CD8-positive, alpha-beta memory T cell (primary cell): ENCODE measurements at regions of chr17 and their contacts with region 1.

Region 1: GRCh38 chr17:1716076-1716995 is 6.2 kb upstream of the TLCD2 start:
- DNase-seq: peak; percentile 100
- H3K4me3 ChIP-seq: peak overlapping the region; percentile 85
- H3K4me3 Mint-ChIP-seq: peak overlapping the region; percentile 88 to 97 (median 93)
- H3K27ac ChIP-seq: peak overlapping the region; percentile 89
- H3K27ac Mint-ChIP-seq: peak overlapping the region; percentile 89 to 100 (median 96)
- H3K4me1 ChIP-seq: peaks cover 31% of the 10 kb centered on the region
- H3K4me1 Mint-ChIP-seq: peaks cover 26 to 39% (median 37%) of the 10 kb centered on the region in 3 donors
- H3K27me3 ChIP-seq: no peaks in the 10 kb centered on the region
- H3K27me3 Mint-ChIP-seq: no peaks in the 10 kb centered on the region

Region 2: DNA sequence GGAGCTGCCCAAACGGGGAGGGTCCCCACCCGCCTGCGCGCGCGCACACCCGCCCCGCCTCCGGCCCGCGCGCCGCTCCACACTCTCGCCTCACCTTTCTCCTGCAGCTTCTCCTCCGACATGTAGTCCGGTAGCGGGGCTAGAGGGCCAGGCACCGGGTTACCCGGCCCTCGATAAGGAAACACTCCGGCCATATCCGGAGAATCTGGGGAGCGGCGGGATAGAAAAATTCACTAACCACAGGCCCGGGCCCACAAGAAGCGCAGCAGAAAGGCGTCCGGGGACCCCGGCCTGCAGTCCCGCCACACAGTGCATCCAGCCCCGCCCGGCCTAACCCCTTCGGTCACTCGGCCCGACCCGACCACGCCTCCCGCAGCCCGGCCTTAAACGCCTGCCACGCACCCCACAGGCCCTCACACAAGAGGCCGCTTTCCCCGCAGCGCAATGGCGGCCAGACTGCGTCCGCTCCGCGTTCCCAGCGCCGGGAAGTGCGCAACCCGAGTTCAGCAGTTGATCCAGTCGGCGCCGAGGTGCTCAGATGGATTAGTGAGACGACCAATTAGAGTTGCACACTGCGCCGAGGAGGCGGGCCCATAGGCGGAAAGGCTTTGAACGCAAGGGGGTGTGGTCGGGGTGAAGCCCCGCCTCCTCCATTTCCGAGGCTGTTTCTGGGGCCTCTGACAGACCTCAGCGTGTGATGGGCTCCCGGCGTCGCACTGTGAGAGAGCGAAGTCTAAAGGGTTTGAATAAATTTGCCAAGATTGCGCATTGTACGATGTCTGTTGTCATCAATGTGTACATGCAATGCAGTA is 31.8 kb before region 1 on chr17 and contains the start of gene PRPF8:
- CTCF ChIA-PET with region 1: no interaction called
- POLR2A ChIA-PET with region 1: interaction called, 26 read pairs
- DNase-seq: peak; percentile 97 to 99 (median 97)
- H3K4me3 ChIP-seq: peak within 1 kb of the TSS; percentile 80
- H3K4me3 Mint-ChIP-seq: peak within 1 kb of the TSS; percentile 91 to 100 (median 99)
- H3K27ac ChIP-seq: peak within 1 kb of the TSS; percentile 94
- H3K27ac Mint-ChIP-seq: peak within 1 kb of the TSS; percentile 85 to 100 (median 99)
- H3K4me1 ChIP-seq: peaks cover 24% of the 10 kb centered on the region
- H3K4me1 Mint-ChIP-seq: peaks cover 38 to 53% (median 47%) of the 10 kb centered on the region in 3 donors
- H3K27me3 ChIP-seq: no peaks in the 10 kb centered on the region
- H3K27me3 Mint-ChIP-seq: no peaks in the 10 kb centered on the region
- total RNA-seq, gene PRPF8: 430 to 447 TPM

Region 3: DNA sequence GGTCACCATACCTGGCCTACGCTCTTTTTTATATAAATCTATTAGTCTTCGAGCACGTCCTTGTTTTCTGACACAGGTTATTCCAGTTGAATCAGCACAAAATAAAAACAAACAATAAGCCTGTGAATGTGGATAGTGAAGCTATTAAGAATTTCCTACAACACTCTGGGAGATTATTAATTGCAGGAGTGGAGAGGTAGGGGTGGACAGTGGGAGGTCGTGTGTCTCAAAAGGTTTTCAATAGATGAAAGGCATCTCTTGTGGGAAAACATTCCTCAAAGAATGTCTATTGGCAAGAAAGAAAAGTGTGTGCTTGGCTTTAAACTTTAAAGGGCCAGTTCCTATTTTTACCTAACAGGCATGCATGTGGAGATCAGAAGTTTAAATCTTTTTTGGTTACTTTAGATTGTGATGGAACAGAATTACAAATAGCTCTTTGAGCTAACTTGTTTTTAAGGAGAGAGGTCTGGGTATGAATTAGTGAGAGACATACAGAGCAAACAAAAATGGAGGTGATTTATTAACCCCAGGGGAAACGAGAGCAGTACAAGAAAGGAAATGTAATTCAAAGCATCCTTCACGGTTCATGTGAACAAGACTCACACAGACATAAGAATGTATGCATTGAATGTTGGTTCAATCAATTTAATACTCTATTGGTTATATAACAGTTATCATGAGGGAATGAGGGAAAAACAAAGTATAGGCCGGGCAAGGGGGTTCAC is 104.4 kb after region 1 on chr17:
- CTCF ChIA-PET with region 1: interaction called, 9 read pairs
- POLR2A ChIA-PET with region 1: interaction called, 12 read pairs
- DNase-seq: no peak
- H3K4me3 ChIP-seq: no peak overlapping the region
- H3K4me3 Mint-ChIP-seq: no peak overlapping the region
- H3K27ac ChIP-seq: no peak overlapping the region
- H3K27ac Mint-ChIP-seq: peak overlapping the region in 1 of 8 donors; percentile 62
- H3K4me1 ChIP-seq: peaks cover 13% of the 10 kb centered on the region
- H3K4me1 Mint-ChIP-seq: peaks cover 12 to 33% (median 30%) of the 10 kb centered on the region in 3 donors
- H3K27me3 ChIP-seq: no peaks in the 10 kb centered on the region
- H3K27me3 Mint-ChIP-seq: no peaks in the 10 kb centered on the region

Region 4: DNA sequence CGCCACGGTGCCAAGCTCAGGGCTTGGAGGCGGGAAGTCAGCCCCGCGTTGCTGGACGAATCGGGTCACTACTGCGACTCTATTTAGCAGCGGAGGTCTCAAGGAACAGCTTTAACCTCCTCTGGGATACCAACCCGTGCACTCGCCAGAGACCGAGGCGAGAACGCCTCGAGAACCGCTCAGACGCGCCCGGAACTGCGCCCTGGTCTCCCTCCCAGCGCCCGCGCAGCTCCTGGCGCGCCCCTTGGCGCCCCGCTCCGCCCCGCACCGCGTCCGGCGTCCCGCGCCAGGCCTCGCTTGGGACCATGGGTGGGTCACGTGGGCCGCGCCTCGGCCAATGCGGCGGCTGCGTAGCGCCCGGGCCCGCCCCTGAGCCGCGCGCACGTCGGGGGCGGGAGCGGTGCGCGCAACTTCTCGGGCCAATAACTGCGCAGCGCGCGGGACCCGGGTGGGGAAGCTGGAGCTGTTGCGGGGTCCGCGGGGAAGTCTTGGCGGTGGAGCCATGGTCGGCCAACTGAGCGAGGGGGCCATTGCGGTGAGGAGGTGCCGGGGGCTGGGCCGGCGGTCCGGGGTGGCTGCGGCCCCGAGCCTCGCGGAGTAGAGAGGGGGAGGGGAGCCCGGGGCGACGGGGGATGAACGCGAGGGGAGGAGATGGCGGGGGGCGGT is 113.4 kb after region 1 on chr17 and contains the starts of genes RPA1 and SMYD4:
- CTCF ChIA-PET with region 1: interaction called, 4 read pairs
- POLR2A ChIA-PET with region 1: interaction called, 20 read pairs
- DNase-seq: peak; percentile 85 to 92 (median 89)
- H3K4me3 ChIP-seq: peak within 1 kb of the TSS; percentile 97
- H3K4me3 Mint-ChIP-seq: peak within 1 kb of the TSS; percentile 95 to 100 (median 97)
- H3K27ac ChIP-seq: peak within 1 kb of the TSS; percentile 78
- H3K27ac Mint-ChIP-seq: peak within 1 kb of the TSS; percentile 85 to 99 (median 92)
- H3K4me1 ChIP-seq: peaks cover 34% of the 10 kb centered on the region
- H3K4me1 Mint-ChIP-seq: peaks cover 45 to 72% (median 68%) of the 10 kb centered on the region in 3 donors
- H3K27me3 ChIP-seq: no peaks in the 10 kb centered on the region
- H3K27me3 Mint-ChIP-seq: no peaks in the 10 kb centered on the region
- total RNA-seq, gene RPA1: 168 to 192 TPM
- total RNA-seq, gene SMYD4: 18.7 to 20.1 TPM

Region 5: DNA sequence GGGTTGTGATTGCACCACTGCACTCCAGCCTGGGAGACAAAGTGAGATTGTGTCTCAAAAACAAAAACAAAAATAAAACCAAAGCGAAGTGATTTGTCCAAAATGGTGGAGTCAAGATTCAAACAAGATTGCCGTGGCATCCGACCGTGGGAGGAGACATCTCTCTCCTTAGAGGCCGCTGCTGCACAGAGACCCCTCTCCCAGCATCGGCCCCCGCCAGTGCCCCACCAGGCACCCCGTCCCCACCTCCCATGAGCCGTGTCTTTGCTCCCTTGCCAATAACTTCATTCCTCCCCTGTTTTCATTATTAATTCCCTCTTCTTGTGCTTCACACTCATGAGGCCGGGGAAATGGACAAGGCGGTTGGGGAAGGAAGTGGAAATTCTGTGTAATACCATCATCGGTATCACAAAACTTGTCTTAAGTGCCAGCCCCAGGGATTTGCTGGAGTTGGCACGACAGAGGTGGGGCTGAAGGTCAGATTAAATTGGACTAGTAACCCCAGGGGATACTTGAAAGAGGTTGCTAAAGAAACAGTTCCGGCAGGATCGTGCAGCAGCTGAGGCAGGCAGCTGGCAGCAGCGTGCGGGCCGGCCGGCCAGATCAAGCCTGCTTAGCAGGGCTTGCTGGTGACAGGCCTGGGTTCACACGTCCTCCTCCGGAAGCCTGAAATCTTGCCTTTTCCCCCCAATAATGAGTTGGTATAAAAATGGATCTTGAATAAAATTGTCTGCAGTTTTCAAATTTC is 242.0 kb after region 1 on chr17:
- CTCF ChIA-PET with region 1: no interaction called
- POLR2A ChIA-PET with region 1: no interaction called
- DNase-seq: no peak
- H3K4me3 ChIP-seq: no peak overlapping the region
- H3K4me3 Mint-ChIP-seq: no peak overlapping the region
- H3K27ac ChIP-seq: no peak overlapping the region
- H3K27ac Mint-ChIP-seq: peak overlapping the region in 1 of 8 donors; percentile 14
- H3K4me1 ChIP-seq: no peaks in the 10 kb centered on the region
- H3K4me1 Mint-ChIP-seq: no peaks in the 10 kb centered on the region
- H3K27me3 ChIP-seq: no peaks in the 10 kb centered on the region
- H3K27me3 Mint-ChIP-seq: peaks cover 0 to 2% of the 10 kb centered on the region in 2 donors